Heart right ventricle (tissue), 16 donors: ENCODE measurements at regions of chr2 and their contacts with region 1.

Region 1: GRCh38 chr2:54906716-54907115 is 143.5 kb downstream of the RTN4 start:
- DNase-seq: no peak
- ATAC-seq: peak in 1 of 8 donors; percentile 54
- H3K4me3 ChIP-seq: no peak overlapping the region
- H3K27ac ChIP-seq: no peak overlapping the region
- H3K4me1 ChIP-seq: peaks cover 0 to 16% (median 0%) of the 10 kb centered on the region in 9 donors
- H3K27me3 ChIP-seq: no peaks in the 10 kb centered on the region
- CTCF ChIP-seq: no peak

Region 2: GRCh38 chr2:54972499-54972898 is 65.8 kb after region 1 on chr2:
- intact Hi-C with region 1: loop called in 1 of 10 experiments (anchors 2 kb)
- DNase-seq: no peak
- ATAC-seq: no peak
- H3K4me3 ChIP-seq: no peak overlapping the region
- H3K27ac ChIP-seq: no peak overlapping the region
- H3K4me1 ChIP-seq: peaks cover 5 to 71% (median 47%) of the 10 kb centered on the region in 9 donors
- H3K27me3 ChIP-seq: no peaks in the 10 kb centered on the region
- CTCF ChIP-seq: no peak